B cell (primary cell): ENCODE measurements at regions of chr6 and their contacts with region 1.

Region 1: GRCh38 chr6:62285612-62286469 is at the start of gene KHDRBS2:
- DNase-seq: peak; percentile 90
- ATAC-seq: peak; percentile 99
- H3K4me3 ChIP-seq: peak within 1 kb of the TSS; percentile 82 to 93 (median 87)
- H3K4me3 Mint-ChIP-seq: peak within 1 kb of the TSS; percentile 92
- H3K27ac ChIP-seq: peak within 1 kb of the TSS; percentile 22 to 73
- H3K27ac Mint-ChIP-seq: peak within 1 kb of the TSS; percentile 93
- H3K4me1 ChIP-seq: peaks cover 13 to 21% of the 10 kb centered on the region in 2 donors
- H3K4me1 Mint-ChIP-seq: peaks cover 34% of the 10 kb centered on the region
- H3K27me3 ChIP-seq: no peaks in the 10 kb centered on the region
- H3K27me3 Mint-ChIP-seq: no peaks in the 10 kb centered on the region
- CTCF ChIP-seq: no peak
- total RNA-seq, gene KHDRBS2: 9.4 and 10.6 TPM in 2 replicates

Region 2: DNA sequence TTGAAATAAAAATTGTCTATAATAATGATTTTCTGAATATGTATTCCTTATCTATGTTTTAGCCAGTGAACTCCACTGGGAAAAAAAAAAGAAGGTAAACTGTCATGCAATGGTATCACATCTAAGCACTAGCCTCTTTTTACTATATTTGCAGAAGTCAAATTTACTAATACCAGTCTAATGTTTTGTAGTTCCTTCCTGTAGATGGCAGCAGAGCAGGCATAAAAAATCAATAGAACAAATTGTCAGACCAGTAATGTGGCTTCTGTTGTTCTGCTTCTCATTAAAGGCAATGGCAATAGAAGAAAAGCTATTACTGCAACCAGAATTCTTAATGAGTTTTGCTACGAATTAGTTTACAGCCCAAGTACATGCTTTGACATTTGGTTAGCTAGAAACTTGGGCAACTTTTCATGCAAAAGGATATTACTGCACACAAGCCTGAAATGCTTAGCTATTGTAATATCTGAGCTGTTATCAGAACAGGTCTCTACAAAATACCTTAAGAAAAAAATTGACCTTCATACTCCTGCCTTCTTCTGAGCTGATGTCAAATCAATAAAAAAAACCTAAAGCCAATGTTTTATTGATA is 476.7 kb before region 1 on chr6:
- CTCF ChIA-PET with region 1: interaction called, 17 read pairs
- POLR2A ChIA-PET with region 1: no interaction called
- intact Hi-C with region 1: loop called (anchors 1 kb)
- DNase-seq: peak; percentile 60
- ATAC-seq: peak; percentile 33
- H3K4me3 ChIP-seq: no peak overlapping the region
- H3K4me3 Mint-ChIP-seq: no peak overlapping the region
- H3K27ac ChIP-seq: no peak overlapping the region
- H3K27ac Mint-ChIP-seq: no peak overlapping the region
- H3K4me1 ChIP-seq: no peaks in the 10 kb centered on the region
- H3K4me1 Mint-ChIP-seq: no peaks in the 10 kb centered on the region
- H3K27me3 ChIP-seq: no peaks in the 10 kb centered on the region
- H3K27me3 Mint-ChIP-seq: no peaks in the 10 kb centered on the region
- CTCF ChIP-seq: peak; percentile 72

Region 3: DNA sequence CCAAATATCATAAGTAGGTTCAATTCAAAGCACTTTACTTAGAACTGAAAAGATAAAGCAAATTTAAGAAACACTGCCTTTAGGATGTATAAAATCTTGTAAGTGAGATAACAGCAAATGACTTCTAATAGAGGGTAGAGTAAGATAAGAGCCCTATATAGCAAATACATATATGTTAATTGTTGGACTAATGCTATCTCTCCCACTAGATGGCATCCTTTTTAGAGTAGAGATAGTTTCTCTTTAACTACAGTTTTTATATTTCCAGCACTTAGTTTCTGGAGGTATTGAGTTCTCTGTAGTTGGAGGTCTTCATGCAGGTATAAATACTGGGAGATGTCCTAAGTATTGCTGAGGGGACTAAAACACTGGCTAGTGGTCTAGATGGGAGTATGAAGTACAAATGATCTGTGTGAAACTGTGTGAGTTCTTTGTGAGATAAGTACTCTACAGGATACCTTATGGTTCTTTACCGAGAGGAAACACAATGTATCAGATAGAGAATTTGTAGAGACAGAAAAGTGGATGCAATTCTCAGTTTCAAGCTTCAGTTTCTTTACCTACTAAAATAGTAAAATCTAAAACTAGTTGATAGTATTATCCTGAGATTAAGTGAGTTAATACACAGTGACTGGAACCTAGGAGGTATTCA is 399.1 kb before region 1 on chr6:
- CTCF ChIA-PET with region 1: interaction called, 17 read pairs
- POLR2A ChIA-PET with region 1: no interaction called
- intact Hi-C with region 1: loop called (anchors 1 kb)
- DNase-seq: peak; percentile 37
- ATAC-seq: peak; percentile 47
- H3K4me3 ChIP-seq: no peak overlapping the region
- H3K4me3 Mint-ChIP-seq: no peak overlapping the region
- H3K27ac ChIP-seq: no peak overlapping the region
- H3K27ac Mint-ChIP-seq: no peak overlapping the region
- H3K4me1 ChIP-seq: no peaks in the 10 kb centered on the region
- H3K4me1 Mint-ChIP-seq: peaks cover 2% of the 10 kb centered on the region
- H3K27me3 ChIP-seq: no peaks in the 10 kb centered on the region
- H3K27me3 Mint-ChIP-seq: no peaks in the 10 kb centered on the region
- CTCF ChIP-seq: peak; percentile 37

Region 4: DNA sequence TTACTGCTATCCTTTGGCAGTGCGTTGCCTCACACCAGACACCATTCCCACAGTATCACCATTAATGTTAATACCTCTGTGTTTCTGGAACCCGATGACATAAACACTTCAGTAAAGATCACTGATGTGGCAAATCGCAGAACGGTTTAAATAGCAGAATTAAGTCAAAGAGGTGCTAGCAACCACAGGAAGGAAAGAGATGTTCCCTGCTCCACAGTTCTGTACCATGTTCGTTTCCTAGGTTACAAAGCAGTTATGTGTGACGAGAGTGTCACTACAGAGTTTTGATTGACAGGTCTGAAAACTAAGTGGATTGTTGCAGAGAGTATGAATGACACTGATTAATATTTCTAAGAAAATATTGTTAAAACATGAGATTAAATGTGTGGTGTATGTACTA is 272.1 kb before region 1 on chr6:
- CTCF ChIA-PET with region 1: no interaction called
- POLR2A ChIA-PET with region 1: no interaction called
- intact Hi-C with region 1: loop called (anchors 10 kb)
- DNase-seq: peak; percentile 69
- ATAC-seq: peak; percentile 61
- H3K4me3 ChIP-seq: no peak overlapping the region
- H3K4me3 Mint-ChIP-seq: no peak overlapping the region
- H3K27ac ChIP-seq: peak overlapping the region in 1 of 2 donors; percentile 65
- H3K27ac Mint-ChIP-seq: no peak overlapping the region
- H3K4me1 ChIP-seq: peaks cover 5% of the 10 kb centered on the region in 2 donors
- H3K4me1 Mint-ChIP-seq: peaks cover 7% of the 10 kb centered on the region
- H3K27me3 ChIP-seq: no peaks in the 10 kb centered on the region
- H3K27me3 Mint-ChIP-seq: no peaks in the 10 kb centered on the region
- CTCF ChIP-seq: no peak

Region 5: DNA sequence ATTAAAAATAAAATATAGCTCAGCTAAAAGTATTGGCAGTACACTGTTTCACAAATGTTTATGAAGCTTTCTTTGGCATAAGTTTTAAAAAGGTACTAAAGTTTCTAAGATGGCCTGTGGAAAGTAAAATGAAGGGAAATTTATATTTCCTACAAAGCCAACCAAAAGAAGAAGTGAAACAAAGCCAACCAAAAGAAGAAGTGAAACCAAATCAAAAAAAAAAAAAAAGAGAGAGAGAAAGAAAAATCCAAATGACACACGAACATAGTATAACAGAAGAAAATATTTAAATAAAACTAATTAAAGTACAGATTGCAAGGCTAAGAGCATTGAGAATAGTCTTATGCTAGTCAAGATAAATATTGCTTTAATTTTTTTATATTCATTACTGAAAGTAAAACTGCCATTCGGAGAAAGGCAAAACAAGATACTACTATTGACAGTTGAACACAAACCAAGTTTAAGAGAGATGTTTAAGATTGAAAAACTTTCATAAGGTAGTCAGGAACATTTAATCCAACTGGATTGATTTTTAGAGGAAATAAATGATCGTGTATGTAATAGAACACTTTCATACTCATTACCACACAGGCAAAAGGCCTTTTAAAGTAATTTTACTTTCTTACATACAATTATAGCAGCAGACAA is 13.0 kb after region 1 on chr6:
- CTCF ChIA-PET with region 1: interaction called, 8 read pairs
- POLR2A ChIA-PET with region 1: interaction called, 3 read pairs
- intact Hi-C with region 1: loop called (anchors 1 kb)
- DNase-seq: peak; percentile 73
- ATAC-seq: peak; percentile 80
- H3K4me3 ChIP-seq: peak overlapping the region in 1 of 5 experiments; percentile 33
- H3K4me3 Mint-ChIP-seq: peak overlapping the region; percentile 48
- H3K27ac ChIP-seq: peak overlapping the region; percentile 42 to 77
- H3K27ac Mint-ChIP-seq: peak overlapping the region; percentile 90
- H3K4me1 ChIP-seq: peaks cover 11 to 23% of the 10 kb centered on the region in 2 donors
- H3K4me1 Mint-ChIP-seq: peaks cover 23% of the 10 kb centered on the region
- H3K27me3 ChIP-seq: no peaks in the 10 kb centered on the region
- H3K27me3 Mint-ChIP-seq: no peaks in the 10 kb centered on the region
- CTCF ChIP-seq: no peak

Region 6: GRCh38 chr6:62367601-62368000 is 81.8 kb after region 1 on chr6:
- CTCF ChIA-PET with region 1: no interaction called
- POLR2A ChIA-PET with region 1: no interaction called
- intact Hi-C with region 1: loop called (anchors 2 kb)
- DNase-seq: peak; percentile 66
- ATAC-seq: peak; percentile 90
- H3K4me3 ChIP-seq: peak overlapping the region in 4 of 5 experiments; percentile 35 to 54 (median 40)
- H3K4me3 Mint-ChIP-seq: peak overlapping the region; percentile 80
- H3K27ac ChIP-seq: peak overlapping the region; percentile 67 to 87
- H3K27ac Mint-ChIP-seq: peak overlapping the region; percentile 15
- H3K4me1 ChIP-seq: peaks cover 8 to 31% of the 10 kb centered on the region in 2 donors
- H3K4me1 Mint-ChIP-seq: peaks cover 25% of the 10 kb centered on the region
- H3K27me3 ChIP-seq: no peaks in the 10 kb centered on the region
- H3K27me3 Mint-ChIP-seq: no peaks in the 10 kb centered on the region
- CTCF ChIP-seq: no peak

Region 7: GRCh38 chr6:62452586-62452985 is 166.7 kb after region 1 on chr6:
- CTCF ChIA-PET with region 1: no interaction called
- POLR2A ChIA-PET with region 1: no interaction called
- intact Hi-C with region 1: no loop called
- DNase-seq: peak; percentile 6
- ATAC-seq: no peak
- H3K4me3 ChIP-seq: no peak overlapping the region
- H3K4me3 Mint-ChIP-seq: no peak overlapping the region
- H3K27ac ChIP-seq: no peak overlapping the region
- H3K27ac Mint-ChIP-seq: no peak overlapping the region
- H3K4me1 ChIP-seq: peaks cover 0 to 6% of the 10 kb centered on the region in 2 donors
- H3K4me1 Mint-ChIP-seq: peaks cover 11% of the 10 kb centered on the region
- H3K27me3 ChIP-seq: no peaks in the 10 kb centered on the region
- H3K27me3 Mint-ChIP-seq: no peaks in the 10 kb centered on the region
- CTCF ChIP-seq: no peak

Region 8: DNA sequence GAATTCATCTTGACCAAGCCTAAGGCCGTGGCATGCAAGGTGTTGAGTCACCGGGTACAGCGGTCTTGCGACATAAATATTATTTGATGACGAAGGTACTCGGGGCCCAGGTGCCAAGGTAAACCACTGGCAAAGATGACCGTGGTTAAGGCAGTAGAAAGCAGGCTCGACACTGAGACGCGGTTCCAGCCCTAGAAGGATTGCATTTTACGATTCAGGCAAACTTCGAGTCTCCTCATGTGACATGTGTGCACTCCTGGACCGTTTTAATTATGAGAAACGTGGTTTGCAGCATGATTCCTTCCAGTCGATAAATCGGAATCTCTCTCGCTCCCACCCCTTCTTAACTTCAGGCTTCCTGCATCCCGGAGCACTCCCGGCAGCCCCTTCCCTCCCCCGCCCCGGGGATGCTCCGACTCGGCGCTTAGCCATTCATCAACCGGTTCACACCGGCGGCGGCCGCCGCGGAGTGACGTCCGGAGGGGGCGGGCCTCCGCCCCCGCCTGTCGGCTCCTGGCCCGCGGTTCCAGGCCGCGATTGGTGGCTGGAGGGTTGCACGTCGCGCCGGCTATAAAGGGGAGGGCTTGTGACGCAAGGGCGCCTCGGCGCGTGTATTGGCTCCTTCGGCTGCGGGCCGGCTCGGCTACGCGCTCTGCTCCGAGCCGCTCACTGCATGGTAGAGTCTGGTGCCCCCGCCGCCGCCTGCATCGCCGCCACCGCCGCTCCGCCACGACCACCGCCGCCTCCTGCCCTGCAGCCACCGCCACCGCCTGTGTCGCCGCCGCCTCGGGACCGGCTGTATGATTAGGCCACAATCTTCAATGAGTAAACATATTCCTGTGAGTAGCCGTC is 1286.3 kb after region 1 on chr6 and contains the starts of genes LOC128125822 and PTP4A1:
- CTCF ChIA-PET with region 1: no interaction called
- POLR2A ChIA-PET with region 1: no interaction called
- intact Hi-C with region 1: loop called (anchors 10 kb)
- DNase-seq: peak; percentile 99
- ATAC-seq: peak; percentile 84
- H3K4me3 ChIP-seq: peak within 1 kb of the TSS; percentile 85 to 94 (median 88)
- H3K4me3 Mint-ChIP-seq: peak within 1 kb of the TSS; percentile 87
- H3K27ac ChIP-seq: peak within 1 kb of the TSS; percentile 98 to 99
- H3K27ac Mint-ChIP-seq: peak within 1 kb of the TSS; percentile 100
- H3K4me1 ChIP-seq: peaks cover 16 to 19% of the 10 kb centered on the region in 2 donors
- H3K4me1 Mint-ChIP-seq: peaks cover 31% of the 10 kb centered on the region
- H3K27me3 ChIP-seq: peaks cover 0 to 2% (median 0%) of the 10 kb centered on the region in 4 experiments
- H3K27me3 Mint-ChIP-seq: no peaks in the 10 kb centered on the region
- CTCF ChIP-seq: no peak
- total RNA-seq, gene PTP4A1: 33.7 and 39.5 TPM in 2 replicates